ENCODE measurements at regions of chr13 and their contacts with region 1.

Region 1: GRCh38 chr13:98368019-98368418 is 190.9 kb upstream of the RNF113B start:
- DNase-seq: no peak
- H3K4me3 ChIP-seq: no peak overlapping the region
- H3K27ac ChIP-seq: no peak overlapping the region
- H3K4me1 ChIP-seq: no peaks in the 10 kb centered on the region
- H3K27me3 ChIP-seq: no peaks in the 10 kb centered on the region
- CTCF ChIP-seq: no peak

Region 2: DNA sequence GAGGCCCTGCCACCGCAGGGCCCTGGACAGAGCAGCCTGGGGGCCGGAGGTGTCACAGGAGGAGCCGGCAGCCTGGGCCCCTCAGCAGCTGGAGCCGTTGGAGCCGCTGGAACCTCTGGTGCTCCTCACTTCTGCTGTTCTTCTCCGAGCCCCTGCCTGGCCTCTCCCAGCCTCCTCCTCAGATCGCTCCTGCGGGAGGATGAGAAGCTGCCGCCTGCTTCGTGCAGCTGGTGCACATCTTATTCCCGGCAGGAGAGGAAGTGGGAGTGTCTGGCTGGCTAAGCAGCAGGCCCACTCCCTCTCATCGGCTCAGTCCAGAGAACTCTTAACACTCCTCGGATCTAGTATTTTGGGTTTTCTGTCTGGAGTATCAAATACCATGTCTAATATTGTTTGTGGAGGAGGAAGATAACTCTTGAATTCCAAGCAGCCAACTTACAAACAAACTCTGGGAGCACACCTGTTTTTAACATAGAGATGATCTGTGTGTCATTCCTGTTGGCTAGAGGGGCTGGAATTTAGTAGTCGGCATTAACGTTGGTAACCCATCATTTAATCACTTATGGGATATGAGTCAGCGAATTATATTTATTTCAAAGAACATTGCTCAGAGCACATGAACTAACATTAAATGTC is 153.9 kb before region 1 on chr13:
- CTCF ChIA-PET with region 1: no interaction called
- dilution Hi-C with region 1: no loop called
- in situ Hi-C with region 1: no loop called
- intact Hi-C with region 1: loop called (anchors 5 kb)
- DNase-seq: no peak
- H3K4me3 ChIP-seq: no peak overlapping the region
- H3K27ac ChIP-seq: no peak overlapping the region
- H3K4me1 ChIP-seq: peaks cover 4% of the 10 kb centered on the region
- H3K27me3 ChIP-seq: no peaks in the 10 kb centered on the region
- CTCF ChIP-seq: no peak